Calu3 (cell line): ENCODE measurements at regions of chr11 and their contacts with region 1.

Region 1: DNA sequence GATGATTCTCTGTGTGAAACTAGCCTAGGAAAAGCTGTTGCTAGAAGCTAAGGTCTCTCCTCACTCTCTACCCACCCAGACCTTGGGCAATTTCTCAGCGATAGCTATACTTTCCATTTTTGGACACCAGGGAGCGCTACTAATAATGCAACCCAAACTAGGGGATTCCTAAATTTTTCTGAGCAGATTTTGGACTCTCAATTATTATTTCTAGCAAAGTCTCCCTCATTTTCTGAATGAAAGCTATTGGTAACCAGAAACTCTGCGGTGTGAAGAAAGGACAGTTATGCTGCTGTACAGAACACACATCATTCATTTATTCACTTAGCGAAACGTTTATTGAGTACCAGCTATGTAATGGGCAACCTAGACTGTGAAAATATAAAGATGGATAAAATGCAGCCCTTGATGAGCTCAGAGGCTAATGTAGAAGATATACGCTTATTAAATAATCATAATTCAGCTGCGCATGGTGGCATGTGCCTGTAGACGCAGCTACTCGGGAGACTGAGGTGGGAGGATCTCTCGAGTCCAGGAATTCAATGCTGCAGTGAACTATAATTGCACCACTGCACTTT is 6.1 kb upstream of the STIM1 start:
- DNase-seq: peak; percentile 63
- H3K4me3 Mint-ChIP-seq: no peak overlapping the region
- H3K27ac Mint-ChIP-seq: no peak overlapping the region
- H3K4me1 Mint-ChIP-seq: peaks cover 9% of the 10 kb centered on the region
- H3K27me3 Mint-ChIP-seq: no peaks in the 10 kb centered on the region
- CTCF ChIP-seq: no peak

Region 2: GRCh38 chr11:3905080-3905953 is 55.9 kb after region 1 on chr11:
- CTCF ChIA-PET with region 1: interaction called, 20 read pairs
- intact Hi-C with region 1: no loop called
- DNase-seq: peak; percentile 82
- H3K4me3 Mint-ChIP-seq: peak overlapping the region; percentile 56
- H3K27ac Mint-ChIP-seq: peak overlapping the region; percentile 95
- H3K4me1 Mint-ChIP-seq: peaks cover 60% of the 10 kb centered on the region
- H3K27me3 Mint-ChIP-seq: no peaks in the 10 kb centered on the region
- CTCF ChIP-seq: no peak

Region 3: GRCh38 chr11:3939211-3939610 is 89.8 kb after region 1 on chr11:
- CTCF ChIA-PET with region 1: interaction called, 10 read pairs
- intact Hi-C with region 1: no loop called
- DNase-seq: no peak
- H3K4me3 Mint-ChIP-seq: no peak overlapping the region
- H3K27ac Mint-ChIP-seq: no peak overlapping the region
- H3K4me1 Mint-ChIP-seq: peaks cover 26% of the 10 kb centered on the region
- H3K27me3 Mint-ChIP-seq: no peaks in the 10 kb centered on the region
- CTCF ChIP-seq: no peak

Region 4: DNA sequence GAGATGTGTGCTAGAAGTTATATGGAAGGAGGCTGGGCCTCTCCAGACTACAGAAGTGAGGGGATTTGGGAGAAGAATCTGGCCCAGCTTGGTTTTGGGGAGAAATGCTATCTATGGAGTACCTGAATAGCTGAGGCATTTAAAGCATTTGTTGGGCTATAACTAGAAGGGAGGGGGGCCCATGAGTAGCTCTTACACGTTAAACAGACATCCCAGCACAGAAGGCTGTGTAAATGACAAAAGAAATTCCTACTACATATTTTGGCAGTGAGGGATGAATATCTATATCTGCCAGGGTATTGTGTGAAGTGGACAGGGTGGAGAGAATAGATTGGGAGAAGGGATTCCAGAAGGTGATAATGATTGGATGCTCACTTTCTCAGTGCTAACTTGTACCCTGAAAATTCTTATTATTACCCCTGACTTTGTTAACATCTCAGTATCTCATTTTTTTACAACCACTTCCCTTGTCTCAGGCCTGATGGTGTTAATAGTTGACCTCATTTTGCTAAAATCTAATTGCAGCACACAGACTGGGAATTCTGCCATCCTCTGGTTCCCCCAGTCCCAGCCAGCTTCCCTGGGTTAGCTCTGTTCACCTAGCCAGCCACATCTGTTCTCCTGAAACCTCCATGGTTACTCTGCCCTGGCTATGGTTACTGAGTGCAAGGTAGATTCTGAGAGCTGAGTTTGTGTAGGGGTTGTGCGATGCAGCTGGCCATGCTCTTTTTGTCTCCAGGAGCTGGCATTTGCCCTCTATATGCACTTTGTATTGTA is 216.4 kb after region 1 on chr11:
- CTCF ChIA-PET with region 1: interaction called, 12 read pairs
- intact Hi-C with region 1: no loop called
- DNase-seq: no peak
- H3K4me3 Mint-ChIP-seq: no peak overlapping the region
- H3K27ac Mint-ChIP-seq: no peak overlapping the region
- H3K4me1 Mint-ChIP-seq: no peaks in the 10 kb centered on the region
- H3K27me3 Mint-ChIP-seq: no peaks in the 10 kb centered on the region
- CTCF ChIP-seq: no peak

Region 5: GRCh38 chr11:4072668-4073285 is 223.4 kb after region 1 on chr11:
- CTCF ChIA-PET with region 1: interaction called, 50 read pairs
- intact Hi-C with region 1: loop called (anchors 1 kb)
- DNase-seq: peak; percentile 62
- H3K4me3 Mint-ChIP-seq: no peak overlapping the region
- H3K27ac Mint-ChIP-seq: no peak overlapping the region
- H3K4me1 Mint-ChIP-seq: no peaks in the 10 kb centered on the region
- H3K27me3 Mint-ChIP-seq: no peaks in the 10 kb centered on the region
- CTCF ChIP-seq: peak; percentile 71